BJ (cell line): ENCODE measurements at regions of chr17 and their contacts with region 1.

Region 1: DNA sequence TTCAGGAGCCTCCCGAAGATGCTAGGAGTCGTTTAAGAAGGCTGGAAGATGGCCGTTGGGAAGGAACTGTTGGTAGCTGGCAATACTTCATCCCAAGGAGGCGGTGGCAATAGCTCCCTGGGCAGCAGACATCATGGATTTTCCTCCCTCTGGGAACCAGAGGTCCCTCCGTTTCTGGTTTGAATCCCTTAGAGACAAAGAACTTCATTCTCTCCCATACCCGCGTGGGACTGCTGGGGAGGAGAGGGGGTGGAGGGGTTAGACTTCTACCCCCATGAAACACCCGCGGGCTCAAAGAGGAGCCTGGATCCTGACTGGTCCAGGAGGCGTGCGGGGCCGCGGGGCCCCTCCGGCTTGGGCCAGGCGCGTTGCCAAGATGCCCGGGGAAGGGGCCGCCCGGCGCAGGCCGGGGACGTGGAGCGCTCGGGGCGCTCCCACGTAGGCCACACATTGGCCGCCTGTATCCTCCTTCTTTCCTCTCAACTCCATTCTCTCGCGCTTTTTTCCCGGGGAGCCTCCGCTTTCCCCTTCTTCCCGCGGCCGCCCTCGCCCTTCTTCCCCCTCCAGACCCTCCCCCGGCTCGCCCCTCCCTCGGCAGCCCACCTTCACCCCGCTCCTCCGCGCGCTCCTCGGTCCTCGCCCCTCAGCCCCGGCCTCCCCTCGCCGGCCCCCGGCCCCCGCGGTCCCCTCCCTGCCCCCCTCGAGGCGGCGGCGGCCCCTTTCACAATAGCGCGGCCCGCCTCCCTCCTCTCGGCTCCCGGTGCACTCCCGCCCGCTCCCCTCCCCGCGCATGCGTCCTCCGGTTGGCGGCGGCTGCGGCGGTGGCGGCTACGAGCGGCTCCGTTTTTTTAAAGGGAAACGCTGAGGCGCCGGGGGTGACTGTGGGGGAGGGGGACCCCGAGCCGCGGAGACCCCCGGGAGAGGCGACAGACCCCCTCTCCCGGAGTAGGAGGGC is at the start of gene MSL1:
- DNase-seq: no peak
- H3K4me3 ChIP-seq: peak within 1 kb of the TSS; percentile 99
- H3K27me3 ChIP-seq: no peaks in the 10 kb centered on the region
- CTCF ChIP-seq: no peak
- polyA plus RNA-seq, gene MSL1: 36.7 and 69.0 TPM in 2 replicates

Region 2: GRCh38 chr17:40139566-40140058 is 18.2 kb after region 1 on chr17:
- CTCF ChIA-PET with region 1: interaction called, 9 read pairs
- POLR2A ChIA-PET with region 1: interaction called, 12 read pairs
- DNase-seq: no peak
- H3K4me3 ChIP-seq: peak overlapping the region; percentile 50
- H3K27me3 ChIP-seq: no peaks in the 10 kb centered on the region
- CTCF ChIP-seq: no peak

Region 3: GRCh38 chr17:40387680-40388079 is 266.2 kb after region 1 on chr17:
- CTCF ChIA-PET with region 1: no interaction called
- POLR2A ChIA-PET with region 1: no interaction called
- DNase-seq: no peak
- H3K4me3 ChIP-seq: no peak overlapping the region
- H3K27me3 ChIP-seq: no peaks in the 10 kb centered on the region
- CTCF ChIP-seq: no peak